Naive thymus-derived CD4-positive, alpha-beta T cell (primary cell): ENCODE measurements at regions of chr5 and their contacts with region 1.

Region 1: DNA sequence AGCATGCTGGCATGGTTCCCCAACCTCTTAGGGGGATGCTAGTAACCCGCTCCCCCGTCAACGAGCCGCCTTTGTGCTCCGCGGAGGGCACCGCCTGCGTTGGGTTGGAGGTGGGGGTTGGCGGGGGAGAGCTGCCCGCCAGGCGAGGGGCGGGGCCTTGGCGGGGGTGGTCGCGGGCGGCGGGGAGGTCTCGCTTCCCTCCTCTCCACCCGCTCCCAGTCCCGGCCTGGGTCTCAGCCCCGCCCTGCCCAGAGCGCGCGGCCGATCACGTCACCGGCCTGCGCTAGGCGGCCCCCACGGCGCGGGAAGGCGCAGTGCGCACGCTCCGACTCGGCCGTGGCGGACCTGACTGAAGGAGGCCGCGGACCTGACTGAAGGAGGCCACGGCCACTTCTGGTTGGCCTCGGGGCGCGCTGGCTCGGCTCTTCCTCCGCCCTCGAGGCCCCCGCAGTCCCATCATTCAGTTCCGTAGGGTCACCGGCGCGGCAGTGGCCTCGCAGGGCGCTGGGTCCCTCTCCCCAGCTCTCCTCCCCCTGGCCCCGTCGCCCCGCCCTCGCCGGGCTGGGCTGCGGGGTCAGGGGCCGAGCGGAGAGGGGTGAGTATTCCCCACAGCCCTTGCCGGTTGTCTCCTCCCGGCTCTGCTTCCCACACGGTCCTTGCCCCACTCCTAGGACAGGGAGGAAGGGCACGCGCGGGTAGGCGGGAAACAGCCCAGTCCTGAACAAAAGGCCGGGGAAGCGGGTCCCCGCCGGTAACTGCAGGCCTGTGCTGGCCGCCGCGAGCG is at the start of gene ATG10:
- DNase-seq: peak; percentile 78 to 93 (median 84)
- ATAC-seq: peak; percentile 95
- H3K4me3 ChIP-seq: peak within 1 kb of the TSS; percentile 67
- H3K4me3 Mint-ChIP-seq: peak within 1 kb of the TSS; percentile 91 to 100 (median 97)
- H3K27ac ChIP-seq: peak within 1 kb of the TSS; percentile 97
- H3K27ac Mint-ChIP-seq: peak within 1 kb of the TSS; percentile 95 to 99 (median 99)
- H3K4me1 ChIP-seq: peaks cover 5 to 10% of the 10 kb centered on the region in 2 donors
- H3K4me1 Mint-ChIP-seq: peaks cover 9 to 40% (median 33%) of the 10 kb centered on the region in 7 donors
- H3K27me3 ChIP-seq: no peaks in the 10 kb centered on the region
- H3K27me3 Mint-ChIP-seq: no peaks in the 10 kb centered on the region
- total RNA-seq, gene ATG10: 6.4 to 9.6 (median 8.2) TPM

Region 2: DNA sequence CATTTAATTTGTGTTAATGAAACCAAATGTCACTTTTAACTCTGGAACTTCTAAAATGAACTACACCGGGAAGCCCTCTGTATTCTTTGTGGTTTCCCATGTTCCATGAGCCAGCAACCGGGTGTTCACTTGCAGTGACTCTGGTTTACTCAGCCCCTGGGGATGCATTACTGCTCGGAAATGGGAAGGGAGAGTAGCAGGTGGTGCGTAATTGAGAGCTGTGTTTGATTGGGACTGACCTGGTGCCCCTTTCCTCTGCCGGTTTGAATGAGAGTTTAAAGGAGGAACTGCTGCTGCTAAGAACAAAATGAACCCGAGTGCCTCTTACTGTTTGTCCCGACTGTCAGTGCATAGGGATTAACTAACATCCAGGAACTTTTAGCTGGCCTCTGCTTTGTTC is 1217.0 kb before region 1 on chr5:
- CTCF ChIA-PET with region 1: no interaction called
- POLR2A ChIA-PET with region 1: no interaction called
- intact Hi-C with region 1: loop called in 1 of 2 experiments (anchors 10 kb)
- DNase-seq: peak in 2 of 9 donors; percentile 11 to 49
- ATAC-seq: no peak
- H3K4me3 ChIP-seq: peak overlapping the region; percentile 7
- H3K4me3 Mint-ChIP-seq: peak overlapping the region; percentile 49 to 87 (median 78)
- H3K27ac ChIP-seq: peak overlapping the region; percentile 57
- H3K27ac Mint-ChIP-seq: peak overlapping the region; percentile 45 to 93 (median 79)
- H3K4me1 ChIP-seq: peaks cover 20 to 28% of the 10 kb centered on the region in 2 donors
- H3K4me1 Mint-ChIP-seq: peaks cover 30 to 61% (median 47%) of the 10 kb centered on the region in 7 donors
- H3K27me3 ChIP-seq: no peaks in the 10 kb centered on the region
- H3K27me3 Mint-ChIP-seq: no peaks in the 10 kb centered on the region

Region 3: DNA sequence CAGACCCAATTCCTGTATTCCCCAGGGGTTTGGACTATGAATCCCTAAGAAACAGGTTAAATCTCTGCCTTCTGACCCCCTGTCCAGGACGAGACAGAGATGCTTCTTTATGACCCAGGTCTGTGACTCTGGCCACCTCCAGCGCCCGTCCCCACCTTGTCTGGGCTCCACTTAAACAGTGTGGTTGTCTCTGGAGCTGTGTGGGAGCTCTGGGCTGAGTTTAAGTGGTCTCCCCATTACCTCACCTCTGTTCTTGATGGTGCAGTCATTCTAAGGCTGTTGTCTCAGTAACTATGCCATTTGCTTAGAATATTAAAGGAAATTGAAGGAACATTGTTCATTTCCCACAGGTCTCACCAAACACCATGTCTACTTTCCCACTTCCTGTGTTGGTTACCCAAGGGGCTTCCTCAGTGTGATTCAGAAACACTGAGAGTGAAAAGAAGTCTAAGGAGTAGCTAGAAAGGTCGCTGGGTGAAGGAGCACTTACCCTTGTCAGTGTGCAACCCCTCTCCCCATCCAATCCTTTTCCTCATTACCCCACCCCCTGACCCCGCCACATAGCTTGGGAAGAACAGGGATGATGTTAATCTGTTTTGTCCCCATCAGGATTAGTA is 866.5 kb before region 1 on chr5:
- CTCF ChIA-PET with region 1: no interaction called
- POLR2A ChIA-PET with region 1: no interaction called
- intact Hi-C with region 1: no loop called
- DNase-seq: no peak
- ATAC-seq: no peak
- H3K4me3 ChIP-seq: no peak overlapping the region
- H3K4me3 Mint-ChIP-seq: peak overlapping the region in 3 of 10 donors; percentile 31 to 47 (median 45)
- H3K27ac ChIP-seq: no peak overlapping the region
- H3K27ac Mint-ChIP-seq: peak overlapping the region; percentile 21 to 86 (median 64)
- H3K4me1 ChIP-seq: peaks cover 12% of the 10 kb centered on the region in 2 donors
- H3K4me1 Mint-ChIP-seq: peaks cover 10 to 40% (median 33%) of the 10 kb centered on the region in 7 donors
- H3K27me3 ChIP-seq: no peaks in the 10 kb centered on the region
- H3K27me3 Mint-ChIP-seq: no peaks in the 10 kb centered on the region

Region 4: DNA sequence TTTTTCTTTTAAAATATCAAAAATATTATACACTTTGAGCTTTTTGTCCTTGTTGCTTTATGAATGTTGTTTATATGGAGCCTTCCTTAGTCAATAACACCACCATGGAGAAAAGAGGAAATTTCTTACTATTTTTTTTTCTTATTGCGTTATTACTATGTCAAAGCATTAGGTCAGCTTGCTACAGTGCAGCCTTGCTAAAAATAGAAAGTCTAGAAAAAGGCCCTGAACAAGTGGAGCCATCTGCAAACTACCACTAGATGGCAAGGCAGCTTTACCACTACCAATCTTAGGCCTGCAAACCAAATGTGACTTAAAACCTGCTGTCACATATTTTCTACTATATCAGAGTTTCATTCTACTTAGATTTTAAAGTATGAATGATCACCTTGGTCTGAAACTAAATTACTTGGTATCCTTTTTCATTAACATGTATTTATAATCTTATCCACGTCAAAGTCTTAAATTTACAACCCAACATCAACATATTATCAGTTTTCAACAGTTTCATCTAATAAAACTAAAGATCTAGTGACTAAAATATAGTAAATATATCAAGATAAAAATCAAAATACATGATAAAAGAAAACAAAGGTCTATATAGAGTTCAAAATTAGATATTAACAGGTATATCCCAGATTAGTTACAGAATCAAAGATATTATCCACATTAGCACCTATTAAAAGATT is 464.9 kb before region 1 on chr5:
- CTCF ChIA-PET with region 1: interaction called, 3 read pairs
- POLR2A ChIA-PET with region 1: no interaction called
- intact Hi-C with region 1: loop called (anchors 2 to 10 kb)
- DNase-seq: peak in 7 of 9 donors; percentile 34 to 66 (median 55)
- ATAC-seq: peak; percentile 96
- H3K4me3 ChIP-seq: no peak overlapping the region
- H3K4me3 Mint-ChIP-seq: no peak overlapping the region
- H3K27ac ChIP-seq: no peak overlapping the region
- H3K27ac Mint-ChIP-seq: no peak overlapping the region
- H3K4me1 ChIP-seq: no peaks in the 10 kb centered on the region
- H3K4me1 Mint-ChIP-seq: peaks cover 0 to 27% (median 8%) of the 10 kb centered on the region in 7 donors
- H3K27me3 ChIP-seq: no peaks in the 10 kb centered on the region
- H3K27me3 Mint-ChIP-seq: no peaks in the 10 kb centered on the region

Region 5: GRCh38 chr5:81948349-81948748 is 23.6 kb before region 1 on chr5:
- CTCF ChIA-PET with region 1: no interaction called
- POLR2A ChIA-PET with region 1: no interaction called
- intact Hi-C with region 1: no loop called
- DNase-seq: no peak
- ATAC-seq: no peak
- H3K4me3 ChIP-seq: no peak overlapping the region
- H3K4me3 Mint-ChIP-seq: no peak overlapping the region
- H3K27ac ChIP-seq: no peak overlapping the region
- H3K27ac Mint-ChIP-seq: no peak overlapping the region
- H3K4me1 ChIP-seq: no peaks in the 10 kb centered on the region
- H3K4me1 Mint-ChIP-seq: no peaks in the 10 kb centered on the region
- H3K27me3 ChIP-seq: no peaks in the 10 kb centered on the region
- H3K27me3 Mint-ChIP-seq: no peaks in the 10 kb centered on the region

Region 6: DNA sequence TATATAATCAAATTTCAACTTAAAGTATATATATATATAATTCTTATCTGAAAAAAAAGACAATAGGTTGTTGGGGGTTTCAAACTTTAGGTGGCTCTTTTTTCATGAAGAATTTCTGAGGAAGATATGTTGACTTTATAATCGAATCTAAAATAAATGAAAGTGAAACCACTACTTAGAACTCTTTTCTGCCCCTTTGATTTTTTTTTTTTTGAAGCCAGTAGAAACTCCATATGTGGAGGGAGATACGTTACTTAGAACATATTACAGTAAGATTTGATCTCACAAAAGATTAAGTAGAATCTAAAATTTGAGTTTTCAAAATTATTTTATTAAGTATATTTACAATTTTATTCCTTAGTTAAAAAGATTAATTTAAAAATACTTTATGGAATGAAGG is 96.8 kb after region 1 on chr5:
- CTCF ChIA-PET with region 1: no interaction called
- POLR2A ChIA-PET with region 1: no interaction called
- intact Hi-C with region 1: loop called (anchors 2 to 5 kb)
- DNase-seq: peak in 6 of 9 donors; percentile 3 to 53 (median 47)
- ATAC-seq: peak; percentile 52
- H3K4me3 ChIP-seq: no peak overlapping the region
- H3K4me3 Mint-ChIP-seq: peak overlapping the region; percentile 27 to 84 (median 73)
- H3K27ac ChIP-seq: no peak overlapping the region
- H3K27ac Mint-ChIP-seq: peak overlapping the region in 7 of 9 donors; percentile 4 to 69 (median 58)
- H3K4me1 ChIP-seq: peaks cover 0 to 3% of the 10 kb centered on the region in 2 donors
- H3K4me1 Mint-ChIP-seq: peaks cover 0 to 21% (median 5%) of the 10 kb centered on the region in 7 donors
- H3K27me3 ChIP-seq: no peaks in the 10 kb centered on the region
- H3K27me3 Mint-ChIP-seq: no peaks in the 10 kb centered on the region

Region 7: GRCh38 chr5:83076742-83077661 is 1105.1 kb after region 1 on chr5 and contains the starts of genes TMEM167A and XRCC4:
- CTCF ChIA-PET with region 1: no interaction called
- POLR2A ChIA-PET with region 1: no interaction called
- intact Hi-C with region 1: loop called (anchors 2 kb)
- DNase-seq: peak; percentile 71 to 97 (median 94)
- ATAC-seq: peak; percentile 99
- H3K4me3 ChIP-seq: peak within 1 kb of the TSS; percentile 78
- H3K4me3 Mint-ChIP-seq: peak within 1 kb of the TSS; percentile 93 to 99 (median 98)
- H3K27ac ChIP-seq: peak within 1 kb of the TSS; percentile 83
- H3K27ac Mint-ChIP-seq: peak within 1 kb of the TSS; percentile 95 to 99 (median 97)
- H3K4me1 ChIP-seq: peaks cover 5 to 16% of the 10 kb centered on the region in 2 donors
- H3K4me1 Mint-ChIP-seq: peaks cover 35 to 65% (median 62%) of the 10 kb centered on the region in 7 donors
- H3K27me3 ChIP-seq: no peaks in the 10 kb centered on the region
- H3K27me3 Mint-ChIP-seq: no peaks in the 10 kb centered on the region
- total RNA-seq, gene TMEM167A: 39.5 to 73.4 (median 42.3) TPM
- total RNA-seq, gene XRCC4: 2.9 to 7.4 (median 4.7) TPM